ENCODE measurements at regions of chr2 and their contacts with region 1.

Region 1: DNA sequence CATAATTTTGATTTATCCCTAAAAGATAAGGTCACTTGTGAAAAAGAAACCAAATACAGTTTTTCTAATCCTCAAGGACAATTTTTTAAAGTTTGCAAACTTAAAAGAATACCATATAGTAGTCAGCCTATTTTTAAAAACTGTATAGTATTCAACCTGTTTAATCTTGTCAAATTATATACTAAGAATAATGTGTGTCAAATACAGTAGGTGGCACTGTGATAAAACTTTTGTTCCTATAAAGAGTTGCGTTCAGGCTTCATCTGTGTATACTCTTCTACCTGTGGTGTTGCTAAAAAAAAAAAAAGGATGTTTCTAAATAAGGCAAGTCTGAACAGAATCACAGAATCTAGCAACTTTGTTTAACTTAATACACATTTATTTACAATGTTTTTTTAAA is 68.6 kb downstream of the CCDC138 start:
- DNase-seq: peak; percentile 37
- H3K4me3 ChIP-seq: no peak overlapping the region
- H3K27ac ChIP-seq: no peak overlapping the region
- H3K4me1 ChIP-seq: no peaks in the 10 kb centered on the region
- H3K27me3 ChIP-seq: no peaks in the 10 kb centered on the region
- CTCF ChIP-seq: peak; percentile 28 to 36

Region 2: GRCh38 chr2:108922141-108922915 is 67.1 kb after region 1 on chr2:
- CTCF ChIA-PET with region 1: no interaction called
- dilution Hi-C with region 1: no loop called
- in situ Hi-C with region 1: no loop called
- intact Hi-C with region 1: loop called (anchors 2 kb)
- DNase-seq: peak; percentile 91
- H3K4me3 ChIP-seq: no peak overlapping the region
- H3K27ac ChIP-seq: no peak overlapping the region
- H3K4me1 ChIP-seq: peaks cover 39% of the 10 kb centered on the region
- H3K27me3 ChIP-seq: peaks cover 14% of the 10 kb centered on the region
- CTCF ChIP-seq: no peak

Region 3: DNA sequence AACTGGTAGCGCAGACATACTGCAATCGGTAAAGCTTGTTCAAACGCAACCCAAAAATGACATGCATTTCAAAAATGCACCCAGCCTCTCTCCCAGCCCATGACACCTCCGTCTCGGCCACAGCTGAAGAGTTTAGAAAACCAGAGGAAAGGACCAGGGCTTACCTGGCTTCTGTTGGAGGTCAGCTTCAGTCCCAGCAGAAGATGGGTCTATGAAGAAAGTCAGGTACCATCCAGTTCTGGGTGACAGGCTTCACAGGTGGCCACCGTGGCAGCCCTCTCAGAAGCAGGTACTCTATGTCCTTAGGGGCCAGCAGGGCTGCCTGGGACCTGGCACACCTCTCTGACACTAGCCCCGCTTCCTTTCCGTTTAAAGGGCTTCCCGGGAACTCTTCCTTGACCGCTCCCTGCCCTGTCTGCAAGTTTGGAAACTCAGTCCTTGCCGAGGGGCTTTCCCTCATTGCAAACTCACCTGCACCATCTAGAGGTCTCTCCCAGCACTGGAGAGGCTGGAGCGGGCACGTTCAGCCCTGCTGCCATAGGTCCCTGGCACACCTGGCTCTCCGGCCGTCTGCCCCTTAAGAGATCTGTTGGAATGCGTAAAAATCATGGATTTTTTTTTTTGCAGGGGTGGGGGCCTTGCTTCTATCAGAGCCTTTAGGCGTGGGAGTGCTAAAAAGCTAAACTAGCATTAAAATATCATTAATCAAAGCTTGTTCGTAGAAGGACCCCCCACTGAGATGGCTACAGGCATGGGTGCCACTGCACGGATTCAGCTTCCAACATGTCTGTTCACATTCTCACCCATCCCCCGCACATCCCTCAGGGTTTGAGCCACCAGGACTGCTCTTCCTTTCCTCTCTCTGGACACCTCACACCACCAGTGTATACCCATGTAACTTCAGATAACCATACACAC is 133.9 kb after region 1 on chr2 and contains the start of gene EDAR:
- CTCF ChIA-PET with region 1: no interaction called
- dilution Hi-C with region 1: no loop called
- in situ Hi-C with region 1: loop called (anchors 10 kb)
- intact Hi-C with region 1: loop called (anchors 1 kb)
- DNase-seq: peak; percentile 70
- H3K4me3 ChIP-seq: peak within 1 kb of the TSS; percentile 35 to 43 (median 39)
- H3K27ac ChIP-seq: no peak within 1 kb of the TSS
- H3K4me1 ChIP-seq: peaks cover 17% of the 10 kb centered on the region
- H3K27me3 ChIP-seq: no peaks in the 10 kb centered on the region
- CTCF ChIP-seq: peak; percentile 89 to 96
- total RNA-seq, gene EDAR: 0.38 to 2.2 TPM

Region 4: DNA sequence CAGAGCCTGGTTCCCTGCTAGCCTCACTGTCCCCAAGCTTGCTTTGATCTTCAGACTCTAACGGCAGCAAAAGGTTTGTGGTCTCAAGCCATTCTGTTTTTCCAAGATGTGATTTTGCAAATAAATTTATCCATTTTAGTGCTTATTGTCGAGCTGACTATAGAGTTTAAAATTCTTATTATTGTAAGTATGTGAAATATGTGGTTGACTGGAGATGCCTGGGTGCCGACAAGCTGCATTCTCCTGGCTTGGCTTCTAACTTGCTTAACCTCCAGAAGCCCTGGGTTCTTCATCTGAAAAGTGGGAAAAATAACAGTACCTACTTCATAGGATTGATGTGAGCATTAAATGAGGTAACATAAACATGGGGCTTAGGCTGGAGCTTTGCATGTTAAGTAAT is 143.7 kb after region 1 on chr2:
- CTCF ChIA-PET with region 1: no interaction called
- dilution Hi-C with region 1: no loop called
- in situ Hi-C with region 1: loop called in 1 of 2 experiments (anchors 10 kb)
- intact Hi-C with region 1: no loop called
- DNase-seq: no peak
- H3K4me3 ChIP-seq: no peak overlapping the region
- H3K27ac ChIP-seq: no peak overlapping the region
- H3K4me1 ChIP-seq: peaks cover 10% of the 10 kb centered on the region
- H3K27me3 ChIP-seq: no peaks in the 10 kb centered on the region
- CTCF ChIP-seq: no peak

Region 5: GRCh38 chr2:109062859-109063700 is 207.9 kb after region 1 on chr2:
- CTCF ChIA-PET with region 1: no interaction called
- dilution Hi-C with region 1: no loop called
- in situ Hi-C with region 1: no loop called
- intact Hi-C with region 1: loop called (anchors 1 kb)
- DNase-seq: no peak
- H3K4me3 ChIP-seq: no peak overlapping the region
- H3K27ac ChIP-seq: no peak overlapping the region
- H3K4me1 ChIP-seq: no peaks in the 10 kb centered on the region
- H3K27me3 ChIP-seq: peaks cover 6% of the 10 kb centered on the region
- CTCF ChIP-seq: no peak

Region 6: GRCh38 chr2:109209412-109209811 is 354.2 kb after region 1 on chr2:
- CTCF ChIA-PET with region 1: interaction called, 5 read pairs
- dilution Hi-C with region 1: no loop called
- in situ Hi-C with region 1: no loop called
- intact Hi-C with region 1: loop called (anchors 10 kb)
- DNase-seq: peak; percentile 66
- H3K4me3 ChIP-seq: no peak overlapping the region
- H3K27ac ChIP-seq: no peak overlapping the region
- H3K4me1 ChIP-seq: peaks cover 36% of the 10 kb centered on the region
- H3K27me3 ChIP-seq: peaks cover 8% of the 10 kb centered on the region
- CTCF ChIP-seq: no peak